Gastrocnemius medialis (tissue), 4 donors: ENCODE measurements at regions of chr15 and their contacts with region 1.

Region 1: GRCh38 chr15:63881431-63881830 is 47.7 kb upstream of the HERC1 start:
- DNase-seq: no peak
- ATAC-seq: no peak
- H3K4me3 ChIP-seq: no peak overlapping the region
- H3K27ac ChIP-seq: peak overlapping the region; percentile 32 to 62 (median 56)
- H3K4me1 ChIP-seq: peaks cover 20 to 34% of the 10 kb centered on the region in 2 donors
- H3K27me3 ChIP-seq: no peaks in the 10 kb centered on the region
- CTCF ChIP-seq: no peak
- POLR2A ChIP-seq: no peak

Region 2: DNA sequence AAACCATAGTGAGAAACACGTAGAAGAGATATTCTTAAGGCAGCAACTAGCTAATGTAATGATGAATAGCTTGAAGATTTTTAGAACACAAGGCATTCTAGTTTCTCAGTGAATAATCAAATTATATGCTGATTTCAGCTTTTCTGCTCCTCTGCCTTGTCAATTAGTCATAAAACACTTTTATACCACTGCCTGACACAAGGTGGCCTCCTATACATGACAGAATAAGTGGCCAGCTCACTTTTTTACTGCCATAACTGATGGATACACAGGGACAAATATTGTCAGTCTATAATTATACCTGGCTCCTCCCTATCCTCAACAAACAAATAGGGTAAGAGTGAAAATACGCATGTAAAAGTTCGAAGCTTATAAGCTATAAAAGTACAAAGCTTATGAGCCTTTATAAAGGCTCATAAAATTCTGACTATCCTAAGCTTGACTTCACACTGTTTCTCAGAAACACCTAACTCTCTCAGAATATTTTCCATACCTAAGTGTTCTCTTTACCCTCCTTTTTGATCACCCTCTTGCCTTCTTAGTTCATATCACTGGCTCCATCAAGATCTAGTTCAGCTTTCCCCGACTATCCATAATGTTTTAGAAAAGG is 129.3 kb before region 1 on chr15:
- in situ Hi-C with region 1: loop called in 3 of 4 experiments (anchors 5 to 25 kb)
- intact Hi-C with region 1: no loop called
- DNase-seq: peak in 1 of 2 donors; percentile 27
- ATAC-seq: peak; percentile 90 to 91
- H3K4me3 ChIP-seq: no peak overlapping the region
- H3K27ac ChIP-seq: peak overlapping the region; percentile 29 to 66 (median 50)
- H3K4me1 ChIP-seq: peaks cover 0 to 13% of the 10 kb centered on the region in 2 donors
- H3K27me3 ChIP-seq: no peaks in the 10 kb centered on the region
- CTCF ChIP-seq: peak; percentile 77 to 82 (median 79)
- POLR2A ChIP-seq: no peak

Region 3: DNA sequence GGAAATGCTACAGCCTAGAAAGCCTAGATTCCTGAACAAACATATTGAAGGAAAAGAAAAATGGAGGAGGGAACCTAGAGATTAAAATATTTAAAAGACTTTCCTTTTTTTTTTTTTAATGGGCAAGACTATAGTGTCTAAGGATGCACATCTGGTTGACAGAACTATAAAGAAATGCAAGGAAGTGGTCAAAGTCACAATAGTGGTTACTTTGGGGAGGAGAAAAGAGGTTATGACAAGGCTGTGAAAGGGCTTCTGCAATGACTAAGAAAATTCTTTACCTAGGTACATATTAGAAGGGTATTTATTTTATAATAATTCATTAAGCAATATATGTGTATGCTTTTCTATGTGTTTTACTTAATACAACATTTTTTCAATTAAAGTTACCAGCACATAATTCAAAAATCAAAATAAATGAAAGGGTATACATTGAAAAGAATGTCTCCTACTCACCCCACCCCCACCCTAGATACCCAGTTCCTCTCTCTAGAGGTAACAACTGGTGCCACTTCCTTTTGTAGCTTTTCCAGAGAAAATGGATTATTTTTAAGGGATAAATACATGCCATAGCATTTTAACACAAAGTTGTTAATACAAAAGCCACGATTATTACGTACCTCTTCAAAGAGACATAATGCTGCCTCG is 117.8 kb before region 1 on chr15:
- in situ Hi-C with region 1: loop called in 3 of 4 experiments (anchors 10 to 25 kb)
- intact Hi-C with region 1: no loop called
- DNase-seq: no peak
- ATAC-seq: no peak
- H3K4me3 ChIP-seq: no peak overlapping the region
- H3K27ac ChIP-seq: peak overlapping the region; percentile 10 to 62 (median 32)
- H3K4me1 ChIP-seq: peaks cover 50 to 53% of the 10 kb centered on the region in 2 donors
- H3K27me3 ChIP-seq: no peaks in the 10 kb centered on the region
- CTCF ChIP-seq: no peak
- POLR2A ChIP-seq: no peak

Region 4: GRCh38 chr15:63839722-63840121 is 41.7 kb before region 1 on chr15:
- in situ Hi-C with region 1: no loop called
- intact Hi-C with region 1: loop called (anchors 1 kb)
- DNase-seq: no peak
- ATAC-seq: no peak
- H3K4me3 ChIP-seq: no peak overlapping the region
- H3K27ac ChIP-seq: peak overlapping the region; percentile 1 to 45 (median 24)
- H3K4me1 ChIP-seq: peaks cover 14 to 16% of the 10 kb centered on the region in 2 donors
- H3K27me3 ChIP-seq: no peaks in the 10 kb centered on the region
- CTCF ChIP-seq: no peak
- POLR2A ChIP-seq: no peak